BJ (cell line): ENCODE measurements at regions of chr1 and their contacts with region 1.

Region 1: DNA sequence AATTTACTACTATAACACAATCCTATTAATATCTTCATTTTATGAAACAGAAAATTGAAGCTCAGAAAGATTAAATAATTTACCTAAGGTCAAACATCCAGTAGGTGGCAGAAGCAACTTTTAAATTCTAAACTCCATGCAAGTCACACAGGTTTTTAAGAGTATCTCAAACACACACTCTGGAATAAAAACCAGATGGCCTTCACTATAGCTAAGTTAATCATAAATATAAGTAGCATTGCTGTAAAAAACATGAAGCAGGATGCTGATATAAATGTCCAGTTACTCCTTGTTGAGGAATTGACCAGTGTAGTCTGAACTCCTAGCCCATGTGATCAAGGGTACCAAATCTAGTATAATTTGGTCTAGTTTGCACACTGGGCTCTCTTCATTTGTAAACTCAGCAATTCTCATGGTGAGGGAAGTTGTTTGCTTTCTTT is 9.4 kb upstream of the FMO3 start:
- DNase-seq: peak; percentile 46
- H3K4me3 ChIP-seq: no peak overlapping the region
- H3K27me3 ChIP-seq: no peaks in the 10 kb centered on the region
- CTCF ChIP-seq: peak; percentile 42

Region 2: GRCh38 chr1:171107262-171107940 is 26.1 kb after region 1 on chr1:
- CTCF ChIA-PET with region 1: no interaction called
- POLR2A ChIA-PET with region 1: no interaction called
- DNase-seq: no peak
- H3K4me3 ChIP-seq: no peak overlapping the region
- H3K27me3 ChIP-seq: no peaks in the 10 kb centered on the region
- CTCF ChIP-seq: no peak

Region 3: DNA sequence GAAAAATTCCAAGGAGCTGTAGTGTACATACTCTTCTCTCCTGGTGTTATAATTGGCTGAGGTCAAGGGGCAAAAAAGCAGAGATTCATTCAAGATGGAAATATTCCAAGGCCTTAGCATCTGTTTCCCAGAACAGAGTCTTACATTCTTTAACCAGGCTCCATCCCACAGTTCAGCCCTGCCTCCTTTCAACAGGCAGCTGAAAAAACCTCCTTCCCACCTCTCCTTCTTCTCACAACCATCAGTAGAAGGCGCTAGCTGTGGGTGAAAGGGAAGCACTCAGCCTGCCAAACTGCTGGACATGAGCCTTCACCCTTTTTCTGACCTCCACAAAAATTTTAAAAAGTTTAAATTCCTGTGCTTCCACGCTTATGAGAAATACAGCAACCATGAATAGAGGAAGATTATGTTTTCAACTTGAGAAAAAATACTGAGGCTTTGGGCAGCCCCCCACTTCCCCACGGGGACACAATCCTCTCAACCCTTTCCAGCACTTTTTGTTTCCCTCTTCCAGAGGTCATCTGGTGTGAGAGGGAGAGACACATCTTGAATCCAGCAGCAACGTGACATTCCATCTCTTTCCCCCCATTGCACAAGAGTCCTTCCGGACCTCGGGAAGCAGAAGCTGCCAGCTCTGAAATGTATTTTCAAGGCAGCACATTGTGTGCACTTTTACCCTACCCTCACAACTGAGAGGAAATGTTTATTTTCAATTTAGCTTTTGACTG is 60.5 kb after region 1 on chr1:
- CTCF ChIA-PET with region 1: interaction called, 18 read pairs
- POLR2A ChIA-PET with region 1: no interaction called
- DNase-seq: peak; percentile 100
- H3K4me3 ChIP-seq: no peak overlapping the region
- H3K27me3 ChIP-seq: no peaks in the 10 kb centered on the region
- CTCF ChIP-seq: peak; percentile 54

Region 4: DNA sequence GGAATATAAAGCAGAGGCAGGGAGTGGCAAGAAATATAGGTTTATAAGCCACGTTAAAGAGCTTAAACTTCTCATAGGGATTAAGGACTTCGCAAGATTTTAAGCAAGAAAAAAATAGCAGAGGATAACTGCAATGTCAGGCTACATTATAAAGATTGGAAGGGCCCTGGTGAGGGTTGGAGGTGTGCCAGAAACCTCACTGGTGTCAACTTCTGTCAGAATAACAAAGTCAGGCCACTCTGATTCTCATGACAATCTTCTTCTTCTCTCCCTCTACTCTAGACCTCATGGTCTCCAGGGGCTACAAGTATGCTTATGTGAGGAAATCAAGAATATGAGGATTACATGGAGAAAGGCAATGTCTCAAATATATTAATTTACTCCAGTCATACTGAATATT is 71.2 kb after region 1 on chr1:
- CTCF ChIA-PET with region 1: no interaction called
- POLR2A ChIA-PET with region 1: no interaction called
- DNase-seq: no peak
- H3K4me3 ChIP-seq: no peak overlapping the region
- H3K27me3 ChIP-seq: no peaks in the 10 kb centered on the region
- CTCF ChIP-seq: no peak

Region 5: GRCh38 chr1:171245458-171246064 is 164.2 kb after region 1 on chr1:
- CTCF ChIA-PET with region 1: interaction called, 15 read pairs
- POLR2A ChIA-PET with region 1: no interaction called
- DNase-seq: no peak
- H3K4me3 ChIP-seq: no peak overlapping the region
- H3K27me3 ChIP-seq: no peaks in the 10 kb centered on the region; the same call in 1 of the 2 replicates
- CTCF ChIP-seq: peak; percentile 84